Endothelial cell of umbilical vein (primary cell): ENCODE measurements at regions of chr10 and their contacts with region 1.

Region 1: DNA sequence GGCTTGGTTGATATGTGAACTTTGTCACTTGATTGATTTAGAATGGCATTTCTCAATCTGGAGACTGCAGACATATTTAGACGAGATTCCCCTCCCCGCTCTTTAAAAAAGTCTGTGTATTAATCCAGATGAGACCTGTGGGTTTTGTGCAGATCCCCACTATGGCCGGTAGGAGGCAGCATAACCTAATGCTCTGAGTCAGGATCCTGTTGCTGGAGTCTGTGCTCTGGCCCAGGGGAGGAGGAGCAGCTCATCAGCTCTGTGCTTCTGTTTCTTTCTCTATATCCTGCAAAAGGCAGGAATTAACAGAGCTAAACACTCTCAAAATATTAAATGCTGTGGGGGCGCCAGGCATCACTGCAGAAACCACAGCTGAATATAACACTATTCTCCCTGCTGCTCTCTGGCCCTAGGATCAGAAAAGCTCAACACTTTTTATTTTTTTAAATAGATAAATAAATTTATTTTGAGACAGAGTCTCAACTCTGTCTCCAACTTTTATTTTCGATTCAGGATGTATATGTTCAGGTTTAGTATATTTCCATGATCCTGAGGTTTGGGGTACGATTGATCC is 23.9 kb upstream of the SEPHS1 start:
- DNase-seq: peak; percentile 83
- H3K4me3 ChIP-seq: no peak overlapping the region
- H3K27ac ChIP-seq: no peak overlapping the region
- H3K4me1 ChIP-seq: no peaks in the 10 kb centered on the region
- H3K27me3 ChIP-seq: peaks cover 9 to 11% of the 10 kb centered on the region in 2 experiments
- CTCF ChIP-seq: peak; percentile 91 to 93
- POLR2A ChIP-seq: no peak

Region 2: DNA sequence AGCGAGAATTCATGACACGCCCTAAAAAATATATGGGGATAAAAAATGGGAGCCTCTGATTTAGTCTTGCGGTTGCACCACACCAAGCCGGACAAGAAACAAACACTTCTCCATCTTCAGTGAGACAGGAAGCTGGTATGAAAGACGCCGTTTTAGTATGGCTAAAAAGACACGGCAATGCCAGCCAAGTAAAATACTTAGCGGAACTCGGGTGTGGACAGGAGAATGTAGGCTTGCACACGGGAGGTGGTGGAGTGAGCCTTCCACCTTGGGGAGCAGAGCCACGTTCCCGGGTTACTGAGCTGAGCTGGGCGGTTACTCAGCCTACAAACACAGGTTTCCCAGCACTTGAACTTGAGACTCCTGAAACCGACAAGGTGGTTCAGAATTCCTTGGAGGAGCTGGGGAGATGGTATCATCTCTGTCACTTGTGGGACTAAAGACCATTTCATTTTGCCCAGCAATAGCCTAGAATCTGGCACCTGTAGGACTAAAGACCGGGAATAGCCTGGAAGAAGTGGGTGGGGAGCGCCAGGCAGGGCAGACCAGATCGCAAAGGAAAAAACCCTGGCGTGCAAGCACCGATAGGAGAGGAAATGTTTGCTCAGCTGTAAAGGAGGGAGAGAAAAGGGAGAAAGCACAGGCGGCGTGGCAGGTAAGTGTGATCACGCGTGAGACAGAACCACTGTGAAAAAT is 10.9 kb after region 1 on chr10:
- CTCF ChIA-PET with region 1: interaction called, 38 read pairs
- POLR2A ChIA-PET with region 1: no interaction called
- dilution Hi-C with region 1: no loop called
- intact Hi-C with region 1: no loop called
- DNase-seq: peak; percentile 25
- H3K4me3 ChIP-seq: peak overlapping the region in 1 of 3 experiments; percentile 0
- H3K27ac ChIP-seq: no peak overlapping the region
- H3K4me1 ChIP-seq: peaks cover 8% of the 10 kb centered on the region
- H3K27me3 ChIP-seq: peaks cover 38 to 43% of the 10 kb centered on the region in 2 experiments
- CTCF ChIP-seq: no peak
- POLR2A ChIP-seq: no peak

Region 3: DNA sequence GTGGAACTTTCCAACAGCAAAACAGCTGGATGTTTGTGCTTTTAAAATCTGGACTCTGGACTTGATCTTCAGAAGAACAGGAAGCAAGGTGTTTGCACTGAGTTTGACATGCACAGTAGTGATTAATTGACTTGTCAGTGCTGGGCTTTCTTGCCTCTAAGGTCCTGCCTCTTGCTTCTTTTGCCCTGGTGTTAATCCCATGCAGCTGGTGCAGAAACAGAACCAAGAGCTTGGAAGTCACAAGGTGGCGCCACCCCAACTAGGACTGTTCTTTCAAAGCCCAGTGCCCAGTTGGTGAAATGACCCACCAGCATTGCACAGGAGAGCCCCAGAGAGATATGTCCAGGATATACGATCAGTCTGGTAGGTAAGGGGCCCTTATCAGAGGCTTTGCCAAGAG is 42.9 kb after region 1 on chr10:
- CTCF ChIA-PET with region 1: interaction called, 15 read pairs
- POLR2A ChIA-PET with region 1: no interaction called
- dilution Hi-C with region 1: no loop called
- intact Hi-C with region 1: no loop called
- DNase-seq: peak; percentile 25
- H3K4me3 ChIP-seq: no peak overlapping the region
- H3K27ac ChIP-seq: no peak overlapping the region
- H3K4me1 ChIP-seq: no peaks in the 10 kb centered on the region
- H3K27me3 ChIP-seq: peaks cover 2 to 3% of the 10 kb centered on the region in 2 experiments
- CTCF ChIP-seq: peak; percentile 18 to 57
- POLR2A ChIP-seq: no peak

Region 4: DNA sequence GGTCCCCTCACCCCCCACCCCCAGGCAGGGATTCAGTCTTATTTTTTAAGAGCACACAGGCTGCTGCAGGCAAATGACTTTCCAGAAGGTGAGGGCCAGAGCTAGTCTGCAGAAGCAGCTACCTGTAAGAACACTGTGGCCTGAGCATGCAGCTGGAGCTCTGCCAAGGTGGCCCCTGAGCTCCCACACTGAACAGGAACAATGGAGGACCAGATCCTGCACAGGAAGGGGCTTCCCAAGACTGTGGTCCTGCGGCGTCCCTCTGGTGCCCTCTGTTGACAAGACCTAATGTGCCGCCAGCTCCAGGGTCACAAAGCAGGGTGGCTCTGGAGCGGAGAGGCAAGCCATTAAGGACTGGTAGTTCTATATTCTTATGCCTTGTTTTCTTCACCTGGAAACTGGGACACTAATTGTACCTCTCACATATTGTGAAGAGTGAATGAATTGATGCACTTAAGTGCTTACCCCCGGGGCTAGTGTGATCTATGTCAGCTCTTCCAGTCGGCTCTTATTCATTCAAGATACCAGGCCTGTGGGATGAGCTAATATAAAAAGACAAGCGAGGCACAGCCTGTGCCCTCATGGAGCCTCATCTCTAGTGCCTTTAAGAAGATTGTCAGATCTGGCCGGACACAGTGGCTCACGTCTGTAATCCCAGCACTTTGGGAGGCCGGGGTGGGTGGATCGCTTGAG is 164.8 kb after region 1 on chr10:
- CTCF ChIA-PET with region 1: interaction called, 52 read pairs
- POLR2A ChIA-PET with region 1: no interaction called
- dilution Hi-C with region 1: no loop called
- intact Hi-C with region 1: loop called (anchors 1 kb)
- DNase-seq: peak; percentile 69
- H3K4me3 ChIP-seq: no peak overlapping the region
- H3K27ac ChIP-seq: no peak overlapping the region
- H3K4me1 ChIP-seq: no peaks in the 10 kb centered on the region
- H3K27me3 ChIP-seq: peaks cover 5 to 6% of the 10 kb centered on the region in 2 experiments
- CTCF ChIP-seq: peak; percentile 64 to 76
- POLR2A ChIP-seq: no peak

Region 5: GRCh38 chr10:13776861-13777311 is 404.9 kb after region 1 on chr10:
- CTCF ChIA-PET with region 1: interaction called, 3 read pairs
- POLR2A ChIA-PET with region 1: no interaction called
- dilution Hi-C with region 1: no loop called
- intact Hi-C with region 1: loop called (anchors 5 kb)
- DNase-seq: no peak
- H3K4me3 ChIP-seq: no peak overlapping the region
- H3K27ac ChIP-seq: peak overlapping the region; percentile 76
- H3K4me1 ChIP-seq: peaks cover 46% of the 10 kb centered on the region
- H3K27me3 ChIP-seq: no peaks in the 10 kb centered on the region
- CTCF ChIP-seq: no peak
- POLR2A ChIP-seq: no peak